Caco-2 (cell line): ENCODE measurements at regions of chr13 and their contacts with region 1.

Region 1: GRCh38 chr13:98293103-98293502 is 116.0 kb upstream of the RNF113B start:
- DNase-seq: peak; percentile 64 to 77
- H3K4me3 ChIP-seq: no peak overlapping the region
- H3K4me3 Mint-ChIP-seq: peak overlapping the region; percentile 24
- H3K27ac Mint-ChIP-seq: peak overlapping the region; percentile 87
- H3K4me1 ChIP-seq: peaks cover 44% of the 10 kb centered on the region
- H3K4me1 Mint-ChIP-seq: peaks cover 47% of the 10 kb centered on the region
- H3K27me3 ChIP-seq: no peaks in the 10 kb centered on the region
- H3K27me3 Mint-ChIP-seq: no peaks in the 10 kb centered on the region
- CTCF ChIP-seq: no peak

Region 2: GRCh38 chr13:98315466-98315865 is 22.4 kb after region 1 on chr13:
- CTCF ChIA-PET with region 1: no interaction called
- POLR2A ChIA-PET with region 1: interaction called, 11 read pairs
- intact Hi-C with region 1: no loop called
- DNase-seq: no peak
- H3K4me3 ChIP-seq: no peak overlapping the region
- H3K4me3 Mint-ChIP-seq: no peak overlapping the region
- H3K27ac Mint-ChIP-seq: no peak overlapping the region
- H3K4me1 ChIP-seq: peaks cover 35% of the 10 kb centered on the region
- H3K4me1 Mint-ChIP-seq: peaks cover 45% of the 10 kb centered on the region
- H3K27me3 ChIP-seq: no peaks in the 10 kb centered on the region
- H3K27me3 Mint-ChIP-seq: no peaks in the 10 kb centered on the region
- CTCF ChIP-seq: no peak